ENCODE measurements at regions of chr2 and their contacts with region 1.

Region 1: DNA sequence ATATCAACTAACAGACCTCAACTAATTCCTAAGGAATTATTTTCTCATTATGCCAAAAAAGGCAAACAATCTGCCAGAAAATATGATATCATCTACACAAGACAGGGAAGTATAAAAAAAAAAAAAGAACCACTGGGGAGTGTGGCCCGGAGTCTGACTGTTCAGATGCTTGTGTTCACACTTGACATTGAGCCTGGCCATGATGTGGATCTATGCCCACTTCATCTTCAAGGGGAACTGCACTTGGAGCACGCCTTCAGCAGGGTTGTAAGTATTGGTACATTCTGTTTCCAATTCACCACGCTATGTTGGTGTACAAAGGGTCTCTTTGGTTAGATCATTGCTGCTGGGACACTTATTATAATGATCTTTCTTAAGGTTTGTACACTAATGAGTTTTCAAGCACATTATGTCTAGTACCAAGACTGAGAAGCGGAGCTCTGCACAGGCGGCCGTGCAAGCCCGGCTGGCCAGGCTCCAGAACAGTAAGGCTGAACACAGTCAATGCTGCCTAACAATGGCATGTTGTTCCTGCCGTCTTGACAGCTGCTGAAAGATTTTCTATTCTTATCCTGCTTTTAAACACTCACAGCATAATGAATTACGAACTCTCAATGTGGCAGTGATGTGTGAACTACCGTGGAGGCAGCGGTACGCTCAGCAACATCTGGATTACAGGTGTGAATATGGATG is 788.4 kb upstream of the SOX11 start:
- DNase-seq: no peak
- ATAC-seq: no peak
- H3K4me3 ChIP-seq: no peak overlapping the region
- H3K27ac ChIP-seq: no peak overlapping the region
- H3K4me1 ChIP-seq: no peaks in the 10 kb centered on the region
- H3K27me3 ChIP-seq: no peaks in the 10 kb centered on the region
- CTCF ChIP-seq: no peak
- EP300 ChIP-seq: no peak
- POLR2A ChIP-seq: no peak
- RAD21 ChIP-seq: no peak

Region 2: DNA sequence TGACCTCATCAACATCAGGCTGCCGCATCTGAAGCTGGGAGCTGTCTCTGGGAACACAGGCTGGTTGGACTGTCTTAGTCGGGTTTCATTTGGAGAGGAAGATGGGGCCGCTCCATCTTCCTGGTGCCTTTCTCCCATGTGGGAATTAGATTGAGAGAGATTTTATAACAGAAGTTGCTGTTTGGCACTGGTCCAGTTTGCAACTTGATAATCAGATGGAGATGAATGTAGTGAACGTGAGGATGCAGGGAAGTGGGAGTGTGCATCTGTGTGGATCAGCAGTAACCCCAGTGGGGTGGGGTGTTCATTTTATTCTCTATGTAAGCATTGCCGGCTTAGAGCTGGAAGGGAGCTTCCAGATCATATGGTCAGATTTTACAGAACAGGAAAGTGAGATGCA is 949.5 kb before region 1 on chr2:
- CTCF ChIA-PET with region 1: no interaction called
- POLR2A ChIA-PET with region 1: no interaction called
- in situ Hi-C with region 1: no loop called
- intact Hi-C with region 1: no loop called
- DNase-seq: no peak
- ATAC-seq: no peak
- H3K4me3 ChIP-seq: no peak overlapping the region
- H3K27ac ChIP-seq: no peak overlapping the region
- H3K4me1 ChIP-seq: no peaks in the 10 kb centered on the region
- H3K27me3 ChIP-seq: no peaks in the 10 kb centered on the region
- CTCF ChIP-seq: no peak
- EP300 ChIP-seq: no peak
- POLR2A ChIP-seq: no peak
- RAD21 ChIP-seq: no peak

Region 3: DNA sequence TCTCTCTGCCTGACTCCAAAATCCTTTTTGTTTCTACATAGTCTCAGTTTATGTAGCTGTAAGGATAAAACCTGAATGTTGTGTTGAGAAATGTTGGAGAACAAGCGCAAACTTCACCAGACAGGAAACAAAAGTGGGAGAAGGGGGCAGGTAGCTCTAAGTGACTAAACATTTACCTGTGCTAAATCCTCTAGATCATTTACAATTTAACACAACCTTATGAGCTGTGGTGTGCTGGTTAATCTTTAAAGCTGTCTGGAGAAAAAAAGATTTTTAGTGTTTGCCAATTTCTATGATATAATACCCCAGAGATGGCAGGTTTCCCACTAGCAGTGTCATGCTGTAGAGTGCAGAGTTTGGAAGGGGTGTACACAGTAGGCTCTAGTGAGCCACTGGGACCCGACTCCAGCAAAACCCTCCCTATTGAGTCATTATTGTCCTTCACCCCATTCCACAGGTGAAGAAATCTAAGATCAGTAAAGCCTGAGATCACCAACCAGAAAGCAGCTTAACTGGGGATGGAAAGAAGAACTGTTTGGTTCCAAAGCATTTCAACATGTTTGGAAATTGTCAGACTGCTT is 208.4 kb before region 1 on chr2:
- CTCF ChIA-PET with region 1: no interaction called
- POLR2A ChIA-PET with region 1: no interaction called
- in situ Hi-C with region 1: no loop called
- intact Hi-C with region 1: loop called (anchors 2 kb)
- DNase-seq: no peak
- ATAC-seq: no peak
- H3K4me3 ChIP-seq: no peak overlapping the region
- H3K27ac ChIP-seq: no peak overlapping the region
- H3K4me1 ChIP-seq: no peaks in the 10 kb centered on the region
- H3K27me3 ChIP-seq: no peaks in the 10 kb centered on the region
- CTCF ChIP-seq: no peak
- EP300 ChIP-seq: no peak
- POLR2A ChIP-seq: no peak
- RAD21 ChIP-seq: no peak

Region 4: DNA sequence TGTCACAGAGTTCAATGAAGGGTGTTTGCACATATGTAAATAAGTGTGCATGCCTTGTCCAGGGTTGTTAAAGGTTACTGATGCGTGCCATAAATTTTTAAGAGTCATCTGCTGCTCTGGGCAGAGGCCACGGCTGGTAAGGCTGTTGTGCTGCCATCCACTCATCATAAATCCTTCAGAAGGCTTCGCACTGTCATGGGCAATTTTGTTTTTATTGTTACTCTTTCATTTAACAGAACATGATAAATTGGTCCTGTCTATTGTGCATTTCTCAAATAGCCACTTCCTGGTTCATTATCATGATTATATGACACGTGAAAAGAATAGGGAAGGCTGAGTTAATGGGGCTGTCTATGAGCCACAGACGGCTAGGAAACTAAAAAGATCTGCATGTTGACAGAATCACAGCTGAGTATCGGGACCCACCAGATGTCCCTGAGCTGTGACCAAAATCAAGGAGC is 154.1 kb after region 1 on chr2:
- CTCF ChIA-PET with region 1: no interaction called
- POLR2A ChIA-PET with region 1: no interaction called
- in situ Hi-C with region 1: no loop called
- intact Hi-C with region 1: no loop called
- DNase-seq: no peak
- ATAC-seq: no peak
- H3K4me3 ChIP-seq: no peak overlapping the region
- H3K27ac ChIP-seq: no peak overlapping the region
- H3K4me1 ChIP-seq: no peaks in the 10 kb centered on the region
- H3K27me3 ChIP-seq: no peaks in the 10 kb centered on the region
- CTCF ChIP-seq: no peak
- EP300 ChIP-seq: no peak
- POLR2A ChIP-seq: no peak
- RAD21 ChIP-seq: no peak